Dorsolateral prefrontal cortex (tissue), 120 donors: ENCODE measurements at regions of chr2 and their contacts with region 1.

Region 1: GRCh38 chr2:240655931-240656886 is 26.5 kb downstream of the AQP12B start:
- DNase-seq: peak in 1 of 10 donors; percentile 18
- H3K4me3 ChIP-seq: no peak overlapping the region
- H3K27ac ChIP-seq: no peak overlapping the region
- H3K27me3 ChIP-seq: peaks cover 0 to 5% (median 0%) of the 10 kb centered on the region in 45 donors
- CTCF ChIP-seq: no peak

Region 2: DNA sequence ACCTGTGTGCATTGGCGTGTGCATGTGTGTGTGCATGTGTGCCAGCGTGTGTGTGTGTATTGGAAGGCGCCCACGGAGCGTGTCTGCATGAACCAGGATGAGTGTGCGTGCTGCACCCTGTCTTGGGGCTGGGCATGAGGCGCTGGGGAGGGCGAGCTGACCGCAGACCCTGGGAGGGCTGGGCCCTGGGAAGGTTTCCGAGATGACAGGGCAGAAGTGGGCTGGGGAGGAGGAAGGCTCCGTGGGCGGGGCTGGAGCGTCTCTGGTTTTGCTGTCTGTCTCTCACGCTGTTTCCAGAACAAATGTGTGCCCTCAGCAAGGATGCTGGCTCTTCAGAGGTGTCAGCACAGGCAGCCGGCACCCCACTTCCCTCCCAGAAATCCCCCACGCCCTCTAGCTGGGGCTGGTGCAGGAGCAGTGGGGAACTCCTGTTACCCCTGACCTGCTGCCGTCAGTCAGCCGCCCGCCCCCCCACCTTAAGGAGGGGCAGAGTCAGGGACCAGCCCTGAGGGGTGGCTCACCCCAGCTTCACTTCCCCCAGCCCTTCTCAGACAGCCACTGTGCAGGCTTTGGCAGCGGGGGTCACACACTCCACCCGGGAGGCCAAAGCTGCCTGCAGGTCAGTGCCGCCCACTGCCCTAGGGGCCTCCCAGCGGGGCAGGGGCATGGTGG is 31.1 kb before region 1 on chr2 and contains the start of gene GPR35:
- intact Hi-C with region 1: loop called in 1 of 2 experiments (anchors 2 kb)
- DNase-seq: peak in 8 of 10 donors; percentile 21 to 69 (median 40)
- H3K4me3 ChIP-seq: no peak within 1 kb of the TSS
- H3K27ac ChIP-seq: no peak within 1 kb of the TSS
- H3K27me3 ChIP-seq: no peaks in the 10 kb centered on the region
- CTCF ChIP-seq: no peak
- total RNA-seq, gene GPR35: 1.7 to 14.3 (median 4.9) TPM